Breast epithelium (tissue), 4 donors: ENCODE measurements at regions of chr20 and their contacts with region 1.

Region 1: DNA sequence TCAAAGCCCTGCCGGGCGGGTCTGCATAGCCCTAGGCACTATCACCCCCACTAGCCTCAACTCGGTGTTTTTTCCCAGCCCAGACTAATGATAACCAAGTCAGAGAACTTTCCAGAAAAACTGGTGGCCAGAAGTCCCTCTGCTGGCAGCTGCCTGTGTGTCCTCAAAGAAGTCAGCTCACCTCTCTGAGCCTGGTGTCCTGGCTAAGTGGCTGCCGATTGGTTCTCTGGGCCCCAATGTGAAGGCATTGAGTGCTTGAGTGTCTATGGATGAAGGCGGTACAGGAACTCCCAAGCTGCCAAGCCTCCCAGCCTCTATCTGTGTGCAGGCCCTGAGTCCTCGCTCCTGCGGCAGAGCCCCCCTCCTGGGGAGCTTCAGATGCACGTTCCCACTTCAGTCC is 355.6 kb downstream of the TAF4 start:
- DNase-seq: no peak
- H3K4me3 ChIP-seq: no peak overlapping the region
- H3K27ac ChIP-seq: no peak overlapping the region
- H3K4me1 ChIP-seq: no peaks in the 10 kb centered on the region
- H3K27me3 ChIP-seq: peaks cover 0 to 18% of the 10 kb centered on the region in 2 donors
- CTCF ChIP-seq: no peak
- POLR2A ChIP-seq: no peak

Region 2: GRCh38 chr20:61638802-61639599 is 71.1 kb before region 1 on chr20:
- intact Hi-C with region 1: loop called (anchors 2 kb)
- DNase-seq: no peak
- H3K4me3 ChIP-seq: no peak overlapping the region
- H3K27ac ChIP-seq: no peak overlapping the region
- H3K4me1 ChIP-seq: no peaks in the 10 kb centered on the region
- H3K27me3 ChIP-seq: peaks cover 0 to 27% of the 10 kb centered on the region in 2 donors
- CTCF ChIP-seq: no peak
- POLR2A ChIP-seq: no peak

Region 3: GRCh38 chr20:61786230-61786629 is 76.1 kb after region 1 on chr20:
- intact Hi-C with region 1: no loop called
- DNase-seq: no peak
- H3K4me3 ChIP-seq: no peak overlapping the region
- H3K27ac ChIP-seq: no peak overlapping the region
- H3K4me1 ChIP-seq: no peaks in the 10 kb centered on the region
- H3K27me3 ChIP-seq: no peaks in the 10 kb centered on the region
- CTCF ChIP-seq: no peak
- POLR2A ChIP-seq: no peak